ENCODE measurements at regions of chr6 and their contacts with region 1.

Region 1: DNA sequence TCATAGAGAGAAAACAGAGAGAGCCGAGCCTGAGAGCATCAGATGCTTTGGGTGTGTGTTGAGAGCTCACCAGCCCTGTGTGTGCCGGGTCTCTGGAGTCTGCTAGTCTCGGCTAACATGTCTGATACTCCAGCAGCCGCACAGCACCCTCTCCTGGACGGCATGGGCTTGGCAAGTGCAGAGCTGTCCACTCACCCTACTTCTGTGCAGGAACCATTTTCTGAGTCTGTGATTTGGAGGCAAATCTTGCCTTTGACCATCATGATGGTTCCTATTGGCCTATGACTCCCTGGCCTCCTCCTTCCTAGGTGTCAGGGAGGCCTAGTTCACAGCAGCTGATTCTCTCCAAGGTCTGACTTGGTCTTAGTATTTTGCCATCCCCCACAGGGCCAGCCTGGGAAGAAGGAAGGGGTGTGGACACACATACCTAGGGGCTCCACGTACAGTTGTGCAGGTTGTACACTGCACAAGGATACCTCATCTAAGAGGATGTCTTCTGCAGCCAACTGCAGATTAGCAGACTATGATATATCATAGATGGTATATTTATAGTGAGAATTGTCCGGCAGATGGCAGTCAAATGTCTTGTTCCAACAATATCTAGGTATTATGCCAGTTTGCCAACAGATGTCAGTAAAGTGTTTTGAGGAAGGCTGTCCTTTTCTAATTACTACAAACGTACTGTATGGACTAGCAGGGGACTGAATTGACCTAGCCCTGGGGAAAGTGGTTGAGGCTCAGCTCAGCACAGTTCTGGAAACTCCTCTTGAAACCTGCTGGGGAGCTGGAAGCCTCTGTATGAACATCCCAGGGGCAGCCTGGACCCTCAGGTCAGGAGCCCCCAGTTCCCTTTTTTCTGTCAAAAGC is 13.0 kb downstream of the FGD2 start:
- DNase-seq: peak; percentile 81 to 92
- ATAC-seq: peak; percentile 92 to 96 (median 92)
- H3K4me3 ChIP-seq: no peak overlapping the region
- H3K4me3 Mint-ChIP-seq: no peak overlapping the region
- H3K27ac ChIP-seq: peak overlapping the region; percentile 34
- H3K27ac Mint-ChIP-seq: peak overlapping the region in 1 of 2 donors; percentile 64
- H3K4me1 ChIP-seq: peaks cover 32% of the 10 kb centered on the region
- H3K4me1 Mint-ChIP-seq: peaks cover 33 to 45% of the 10 kb centered on the region in 2 donors
- H3K27me3 ChIP-seq: no peaks in the 10 kb centered on the region
- H3K27me3 Mint-ChIP-seq: no peaks in the 10 kb centered on the region
- CTCF ChIP-seq: peak; percentile 91

Region 2: DNA sequence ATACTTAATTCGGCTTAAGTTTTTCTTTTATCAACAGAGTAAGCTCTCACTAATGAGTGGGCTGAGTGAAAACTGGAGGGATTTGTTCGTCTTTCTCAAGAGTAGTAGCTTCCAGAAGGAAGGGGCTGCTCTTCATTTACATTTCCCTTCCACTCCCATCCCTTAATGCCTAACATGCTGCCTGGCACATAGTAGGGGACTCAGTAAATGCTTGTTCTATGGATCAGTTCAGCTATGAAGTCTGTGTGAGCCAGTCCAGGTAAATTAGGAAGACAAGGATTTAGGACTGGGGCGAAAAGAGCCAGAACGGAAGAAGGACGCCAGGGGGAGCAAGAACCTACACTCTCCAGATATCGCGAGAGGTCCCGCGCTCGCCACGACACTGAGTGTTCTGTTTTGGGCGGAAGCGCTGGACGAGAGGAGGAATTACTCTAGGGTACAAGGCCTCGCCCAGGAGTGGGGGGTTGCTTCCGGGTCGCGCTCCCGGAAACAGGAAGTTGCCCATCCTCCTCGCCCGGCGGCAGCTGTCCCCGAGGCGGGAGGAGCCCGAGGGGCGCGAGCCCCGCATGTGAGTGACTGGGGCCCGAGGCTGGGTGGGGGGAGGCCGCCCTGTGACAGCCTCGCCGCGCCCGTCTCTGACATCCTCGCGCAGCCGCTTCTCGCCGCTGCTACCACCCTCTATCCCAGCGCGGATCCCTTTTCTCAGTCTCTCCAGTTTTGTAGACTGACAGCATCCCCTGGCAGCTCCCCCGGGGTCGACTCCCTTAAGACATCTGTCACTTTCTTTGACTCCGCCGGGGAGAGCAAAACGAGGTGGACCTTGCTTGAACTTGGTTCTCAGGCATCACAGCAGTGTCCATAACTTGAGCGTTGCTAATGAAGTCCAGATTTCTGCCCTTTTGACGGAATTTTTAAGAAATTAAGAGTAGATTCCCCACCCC is 132.7 kb before region 1 on chr6 and contains the start of gene C6orf89:
- intact Hi-C with region 1: loop called (anchors 1 kb)
- DNase-seq: peak; percentile 93 to 99
- ATAC-seq: peak; percentile 97 to 100 (median 98)
- H3K4me3 ChIP-seq: peak within 1 kb of the TSS; percentile 77
- H3K4me3 Mint-ChIP-seq: peak within 1 kb of the TSS; percentile 93
- H3K27ac ChIP-seq: peak within 1 kb of the TSS; percentile 73
- H3K27ac Mint-ChIP-seq: peak within 1 kb of the TSS; percentile 89 to 91
- H3K4me1 ChIP-seq: peaks cover 7% of the 10 kb centered on the region
- H3K4me1 Mint-ChIP-seq: peaks cover 28 to 33% of the 10 kb centered on the region in 2 donors
- H3K27me3 ChIP-seq: no peaks in the 10 kb centered on the region
- H3K27me3 Mint-ChIP-seq: no peaks in the 10 kb centered on the region
- CTCF ChIP-seq: peak; percentile 79
- total RNA-seq, gene C6orf89: 34.3 to 47.0 (median 46.3) TPM

Region 3: DNA sequence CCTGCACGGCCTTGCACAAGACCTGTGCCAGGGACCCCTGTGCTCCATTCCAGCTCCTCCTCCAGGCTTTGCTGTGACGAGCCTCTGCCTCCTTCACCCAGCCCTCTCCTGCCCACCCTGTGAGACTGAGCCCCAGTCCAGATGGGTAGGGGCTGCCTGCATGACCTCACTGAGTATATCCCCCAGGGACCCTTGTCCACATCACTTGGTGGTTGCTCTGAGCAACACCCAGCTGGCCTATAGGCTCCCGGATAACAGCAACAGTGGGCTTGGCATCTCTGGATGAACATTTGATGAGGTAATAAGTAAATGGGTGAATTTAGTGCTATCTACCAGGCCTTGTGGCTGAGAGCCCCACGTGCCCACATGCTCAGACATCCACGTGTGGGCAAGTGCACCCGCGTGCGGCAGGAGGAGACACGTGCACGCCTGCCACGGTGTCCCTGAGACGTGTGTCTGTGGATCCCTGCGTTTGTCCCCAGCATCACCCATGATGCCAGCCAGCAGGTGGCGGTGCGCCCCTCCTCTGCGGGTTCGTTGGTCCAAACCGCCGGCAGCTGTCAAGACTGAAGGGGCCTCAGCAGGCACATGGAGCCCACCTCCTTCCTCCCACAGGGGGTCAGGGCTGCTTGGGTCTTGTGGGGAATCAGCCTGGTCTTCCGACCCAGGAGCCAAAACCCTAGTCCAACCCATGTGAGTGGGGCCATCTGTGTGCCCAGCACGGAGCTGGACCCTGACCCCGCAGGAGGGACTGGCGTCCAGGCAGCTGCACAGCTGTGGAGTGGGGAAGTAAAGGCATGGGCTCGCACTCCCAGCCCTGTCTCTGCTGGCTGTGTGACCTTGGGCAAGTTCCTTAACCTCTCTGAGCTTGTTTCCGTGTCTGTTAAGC is 33.0 kb after region 1 on chr6:
- intact Hi-C with region 1: loop called (anchors 1 kb)
- DNase-seq: peak; percentile 88 to 94
- ATAC-seq: peak; percentile 53 to 80 (median 73)
- H3K4me3 ChIP-seq: no peak overlapping the region
- H3K4me3 Mint-ChIP-seq: peak overlapping the region; percentile 84
- H3K27ac ChIP-seq: peak overlapping the region; percentile 99
- H3K27ac Mint-ChIP-seq: peak overlapping the region; percentile 99 to 100
- H3K4me1 ChIP-seq: peaks cover 61% of the 10 kb centered on the region
- H3K4me1 Mint-ChIP-seq: peaks cover 60 to 63% of the 10 kb centered on the region in 2 donors
- H3K27me3 ChIP-seq: no peaks in the 10 kb centered on the region
- H3K27me3 Mint-ChIP-seq: no peaks in the 10 kb centered on the region
- CTCF ChIP-seq: peak; percentile 85

Region 4: GRCh38 chr6:37207903-37208456 is 189.5 kb after region 1 on chr6:
- intact Hi-C with region 1: loop called (anchors 1 kb)
- DNase-seq: peak; percentile 83 to 91
- ATAC-seq: peak; percentile 91
- H3K4me3 ChIP-seq: no peak overlapping the region
- H3K4me3 Mint-ChIP-seq: peak overlapping the region; percentile 28
- H3K27ac ChIP-seq: peak overlapping the region; percentile 37
- H3K27ac Mint-ChIP-seq: peak overlapping the region; percentile 59 to 82
- H3K4me1 ChIP-seq: peaks cover 50% of the 10 kb centered on the region
- H3K4me1 Mint-ChIP-seq: peaks cover 51 to 54% of the 10 kb centered on the region in 2 donors
- H3K27me3 ChIP-seq: no peaks in the 10 kb centered on the region
- H3K27me3 Mint-ChIP-seq: no peaks in the 10 kb centered on the region
- CTCF ChIP-seq: peak; percentile 92

Region 5: GRCh38 chr6:37607944-37608343 is 589.5 kb after region 1 on chr6:
- intact Hi-C with region 1: no loop called
- DNase-seq: no peak
- ATAC-seq: no peak
- H3K4me3 ChIP-seq: no peak overlapping the region
- H3K4me3 Mint-ChIP-seq: no peak overlapping the region
- H3K27ac ChIP-seq: no peak overlapping the region
- H3K27ac Mint-ChIP-seq: no peak overlapping the region
- H3K4me1 ChIP-seq: no peaks in the 10 kb centered on the region
- H3K4me1 Mint-ChIP-seq: no peaks in the 10 kb centered on the region
- H3K27me3 ChIP-seq: no peaks in the 10 kb centered on the region
- H3K27me3 Mint-ChIP-seq: peaks cover 13 to 19% of the 10 kb centered on the region in 2 donors
- CTCF ChIP-seq: no peak

Measured in natural killer cell (primary cell).